ENCODE measurements at regions of chr1 and their contacts with region 1.

Region 1: GRCh38 chr1:42846257-42847110 is at the start of gene ZNF691:
- DNase-seq: peak; percentile 86
- H3K4me3 Mint-ChIP-seq: peak within 1 kb of the TSS; percentile 96
- H3K27ac Mint-ChIP-seq: peak within 1 kb of the TSS; percentile 75
- H3K4me1 Mint-ChIP-seq: peaks cover 33% of the 10 kb centered on the region
- H3K27me3 Mint-ChIP-seq: no peaks in the 10 kb centered on the region
- total RNA-seq, gene ZNF691: 8.4 and 9.6 TPM in 2 replicates

Region 2: DNA sequence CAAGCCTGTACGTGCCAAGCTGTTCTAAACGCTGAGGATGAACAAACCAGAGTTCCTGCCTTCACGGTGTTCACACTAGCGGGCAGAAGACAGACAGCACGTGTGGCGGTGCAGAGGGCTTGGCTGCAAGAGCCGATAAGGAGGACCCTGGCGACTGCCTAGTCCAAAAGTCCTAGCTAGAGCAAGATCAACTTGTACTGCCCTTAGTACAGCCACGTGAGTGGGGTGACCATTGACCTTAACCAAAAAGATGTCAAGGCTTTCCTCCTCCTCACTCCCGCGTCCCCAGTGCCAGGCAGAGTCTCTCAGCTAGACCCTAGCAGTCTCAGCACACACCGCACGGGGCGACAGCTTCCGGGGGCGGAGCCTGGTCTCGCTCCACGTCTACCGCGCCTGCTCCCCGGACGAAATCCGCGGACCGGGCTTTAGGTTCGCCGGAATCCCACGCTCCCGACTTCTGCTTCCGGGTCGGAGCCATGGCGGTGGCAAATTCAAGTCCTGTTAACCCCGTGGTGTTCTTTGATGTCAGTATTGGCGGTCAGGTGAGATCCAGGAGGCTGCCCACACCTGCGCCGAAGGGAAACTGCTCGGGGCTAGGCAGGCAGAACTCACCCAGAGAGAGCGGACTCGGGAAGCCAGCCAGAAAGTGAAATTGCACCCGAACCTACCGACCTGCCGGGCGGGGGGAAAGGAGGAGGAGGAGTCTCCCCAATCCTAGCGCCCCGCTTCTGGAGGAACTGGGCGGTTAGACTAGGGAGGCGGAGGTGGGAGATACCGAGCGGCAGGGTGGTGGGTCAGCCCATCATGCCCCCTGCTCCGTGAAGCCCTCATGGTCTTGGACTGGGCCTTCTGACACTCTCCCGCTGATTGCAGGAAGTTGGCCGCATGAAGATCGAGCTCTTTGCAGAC is 188.3 kb before region 1 on chr1 and contains the start of gene PPIH:
- intact Hi-C with region 1: loop called (anchors 5 kb)
- DNase-seq: peak; percentile 93
- H3K4me3 Mint-ChIP-seq: peak within 1 kb of the TSS; percentile 99
- H3K27ac Mint-ChIP-seq: peak within 1 kb of the TSS; percentile 97
- H3K4me1 Mint-ChIP-seq: peaks cover 37% of the 10 kb centered on the region
- H3K27me3 Mint-ChIP-seq: peaks cover 4% of the 10 kb centered on the region
- total RNA-seq, gene PPIH: 77.5 and 78.7 TPM in 2 replicates

Region 3: GRCh38 chr1:42777852-42778251 is 68.6 kb before region 1 on chr1:
- intact Hi-C with region 1: loop called (anchors 2 kb)
- DNase-seq: no peak
- H3K4me3 Mint-ChIP-seq: no peak overlapping the region
- H3K27ac Mint-ChIP-seq: no peak overlapping the region
- H3K4me1 Mint-ChIP-seq: peaks cover 42% of the 10 kb centered on the region
- H3K27me3 Mint-ChIP-seq: no peaks in the 10 kb centered on the region

Region 4: GRCh38 chr1:42816585-42817434 is 29.7 kb before region 1 on chr1 and contains the starts of genes ERMAP and SVBP:
- intact Hi-C with region 1: loop called (anchors 1 kb)
- DNase-seq: peak; percentile 89
- H3K4me3 Mint-ChIP-seq: peak within 1 kb of the TSS; percentile 85
- H3K27ac Mint-ChIP-seq: peak within 1 kb of the TSS; percentile 84
- H3K4me1 Mint-ChIP-seq: peaks cover 22% of the 10 kb centered on the region
- H3K27me3 Mint-ChIP-seq: no peaks in the 10 kb centered on the region
- total RNA-seq, gene ERMAP: 3.1 and 4.8 TPM in 2 replicates
- total RNA-seq, gene SVBP: 11.4 and 12.3 TPM in 2 replicates

Region 5: DNA sequence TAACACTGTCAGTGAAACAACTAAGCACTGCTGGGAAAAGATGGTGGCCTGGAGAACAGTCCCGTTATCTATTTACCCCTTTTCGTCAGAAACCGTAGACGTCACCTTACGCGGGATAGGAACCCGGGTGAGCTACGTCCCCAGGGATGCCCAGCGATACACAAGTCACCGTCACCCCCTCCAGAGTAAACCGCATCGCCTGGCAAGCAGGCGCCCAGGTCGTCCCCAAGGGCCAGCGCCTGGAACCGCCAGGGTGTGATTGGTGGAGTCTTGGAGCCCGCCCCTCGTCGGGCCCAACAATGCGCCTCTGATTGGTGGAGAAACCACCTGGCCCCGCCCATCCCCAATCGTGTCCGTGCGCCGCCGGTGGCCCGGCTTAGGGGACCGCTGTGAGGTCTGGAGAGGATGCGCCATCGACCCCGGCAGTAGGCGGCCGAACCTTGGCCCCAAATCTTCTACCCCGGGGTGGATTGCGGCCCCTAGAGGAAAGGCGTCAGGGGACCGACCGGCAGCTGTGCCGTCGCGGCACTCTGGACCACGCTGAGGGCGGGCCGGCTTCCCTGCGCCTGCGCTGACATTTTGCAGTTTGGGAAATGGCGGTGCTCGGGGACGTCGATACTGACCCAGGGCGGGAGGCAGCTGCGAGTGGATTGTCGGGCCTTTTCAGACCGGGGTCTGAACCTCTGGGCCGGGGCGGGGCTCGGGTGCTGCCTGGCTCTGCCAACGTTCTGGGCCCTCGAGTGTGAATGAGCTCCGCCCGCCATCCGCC is 77.8 kb after region 1 on chr1:
- intact Hi-C with region 1: loop called (anchors 5 kb)
- DNase-seq: peak; percentile 89
- H3K4me3 Mint-ChIP-seq: peak overlapping the region; percentile 80
- H3K27ac Mint-ChIP-seq: peak overlapping the region; percentile 93
- H3K4me1 Mint-ChIP-seq: peaks cover 35% of the 10 kb centered on the region
- H3K27me3 Mint-ChIP-seq: no peaks in the 10 kb centered on the region